ENCODE measurements at regions of chr7 and their contacts with region 1.

Region 1: DNA sequence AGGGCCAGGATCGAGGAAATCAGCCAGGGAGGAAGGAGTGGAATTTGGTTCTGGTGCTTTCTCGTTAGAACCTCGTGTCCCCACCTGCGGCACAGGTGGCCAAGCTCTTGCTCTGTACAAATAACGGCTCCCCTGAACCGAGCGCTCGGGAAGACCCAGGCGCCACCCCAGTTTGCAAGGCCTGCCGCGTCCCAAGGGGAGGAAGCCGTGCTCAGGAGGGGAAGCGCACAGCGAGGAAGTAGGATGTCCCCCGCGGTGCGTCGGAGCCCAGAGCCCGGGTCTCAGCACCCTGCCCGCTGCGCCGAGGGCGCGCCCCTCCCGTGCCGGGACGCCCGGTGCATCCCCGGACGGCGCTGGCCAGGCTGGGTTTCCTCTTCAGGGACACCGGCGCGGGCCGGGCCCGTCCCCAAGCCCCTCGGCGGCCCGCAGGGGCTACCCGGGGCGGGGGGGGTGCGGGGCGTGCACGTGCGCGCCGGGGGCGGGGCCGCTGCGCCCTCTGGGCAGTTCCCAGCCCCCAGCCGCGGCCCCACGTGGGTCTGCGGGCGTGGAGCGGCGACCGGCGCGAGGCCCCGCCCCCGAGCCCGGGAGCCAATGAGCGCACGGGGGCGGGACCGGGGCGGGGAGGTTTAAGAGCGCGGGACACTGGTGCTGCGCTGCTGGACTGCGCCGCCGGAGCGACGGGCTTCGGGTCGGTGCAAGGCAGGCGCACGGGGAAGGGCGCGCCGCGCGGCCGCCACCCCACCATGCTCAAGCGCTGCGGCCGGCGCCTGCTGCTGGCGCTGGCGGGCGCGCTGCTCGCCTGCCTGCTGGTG is at the start of gene LFNG:
- DNase-seq: peak; percentile 96
- H3K4me3 Mint-ChIP-seq: peak within 1 kb of the TSS; percentile 97
- H3K27ac Mint-ChIP-seq: peak within 1 kb of the TSS; percentile 91
- H3K4me1 Mint-ChIP-seq: peaks cover 35% of the 10 kb centered on the region
- H3K27me3 Mint-ChIP-seq: peaks cover 7% of the 10 kb centered on the region
- total RNA-seq, gene LFNG: 33.9 and 34.2 TPM in 2 replicates

Region 2: GRCh38 chr7:2354186-2354938 is 165.0 kb before region 1 on chr7 and contains the start of gene EIF3B:
- intact Hi-C with region 1: loop called (anchors 5 kb)
- DNase-seq: peak; percentile 96
- H3K4me3 Mint-ChIP-seq: peak within 1 kb of the TSS; percentile 96
- H3K27ac Mint-ChIP-seq: peak within 1 kb of the TSS; percentile 98
- H3K4me1 Mint-ChIP-seq: peaks cover 30% of the 10 kb centered on the region
- H3K27me3 Mint-ChIP-seq: no peaks in the 10 kb centered on the region
- total RNA-seq, gene EIF3B: 284 TPM in 2 replicates

Region 3: DNA sequence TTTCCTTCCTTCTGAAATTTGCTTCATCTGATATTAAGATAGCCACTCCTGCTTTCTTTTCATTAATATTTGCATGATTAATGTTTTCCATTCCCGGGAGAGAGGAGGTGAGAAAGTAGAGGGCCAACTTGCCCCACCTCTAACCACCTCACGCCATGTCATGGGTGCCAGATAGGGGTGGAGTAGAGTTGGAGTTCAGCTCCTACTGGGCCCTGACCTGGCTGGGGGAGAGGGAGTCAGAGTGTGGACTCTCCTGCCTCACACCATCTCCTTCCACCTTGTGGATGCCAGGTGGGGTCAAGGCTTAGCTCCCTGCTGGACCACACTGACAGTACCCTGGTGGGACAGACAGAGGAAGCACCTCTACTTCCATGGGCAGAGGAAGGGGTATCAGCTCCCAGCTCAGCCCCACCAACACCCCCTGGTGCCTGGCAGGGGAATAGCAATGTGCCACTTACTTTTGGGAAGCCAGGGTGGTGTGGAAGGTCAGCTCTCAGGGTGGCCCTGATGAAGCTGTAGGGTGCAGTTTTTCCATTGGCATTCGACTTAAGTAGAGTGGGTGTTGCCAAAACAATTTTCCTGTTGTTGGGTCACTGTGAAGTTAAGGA is 88.0 kb before region 1 on chr7:
- intact Hi-C with region 1: no loop called
- DNase-seq: peak; percentile 80
- H3K4me3 Mint-ChIP-seq: no peak overlapping the region
- H3K27ac Mint-ChIP-seq: no peak overlapping the region
- H3K4me1 Mint-ChIP-seq: peaks cover 7% of the 10 kb centered on the region
- H3K27me3 Mint-ChIP-seq: no peaks in the 10 kb centered on the region

Region 4: GRCh38 chr7:2477447-2478398 is 41.6 kb before region 1 on chr7:
- intact Hi-C with region 1: loop called (anchors 5 kb)
- DNase-seq: peak; percentile 91
- H3K4me3 Mint-ChIP-seq: no peak overlapping the region
- H3K27ac Mint-ChIP-seq: no peak overlapping the region
- H3K4me1 Mint-ChIP-seq: peaks cover 3% of the 10 kb centered on the region
- H3K27me3 Mint-ChIP-seq: peaks cover 2% of the 10 kb centered on the region

Region 5: DNA sequence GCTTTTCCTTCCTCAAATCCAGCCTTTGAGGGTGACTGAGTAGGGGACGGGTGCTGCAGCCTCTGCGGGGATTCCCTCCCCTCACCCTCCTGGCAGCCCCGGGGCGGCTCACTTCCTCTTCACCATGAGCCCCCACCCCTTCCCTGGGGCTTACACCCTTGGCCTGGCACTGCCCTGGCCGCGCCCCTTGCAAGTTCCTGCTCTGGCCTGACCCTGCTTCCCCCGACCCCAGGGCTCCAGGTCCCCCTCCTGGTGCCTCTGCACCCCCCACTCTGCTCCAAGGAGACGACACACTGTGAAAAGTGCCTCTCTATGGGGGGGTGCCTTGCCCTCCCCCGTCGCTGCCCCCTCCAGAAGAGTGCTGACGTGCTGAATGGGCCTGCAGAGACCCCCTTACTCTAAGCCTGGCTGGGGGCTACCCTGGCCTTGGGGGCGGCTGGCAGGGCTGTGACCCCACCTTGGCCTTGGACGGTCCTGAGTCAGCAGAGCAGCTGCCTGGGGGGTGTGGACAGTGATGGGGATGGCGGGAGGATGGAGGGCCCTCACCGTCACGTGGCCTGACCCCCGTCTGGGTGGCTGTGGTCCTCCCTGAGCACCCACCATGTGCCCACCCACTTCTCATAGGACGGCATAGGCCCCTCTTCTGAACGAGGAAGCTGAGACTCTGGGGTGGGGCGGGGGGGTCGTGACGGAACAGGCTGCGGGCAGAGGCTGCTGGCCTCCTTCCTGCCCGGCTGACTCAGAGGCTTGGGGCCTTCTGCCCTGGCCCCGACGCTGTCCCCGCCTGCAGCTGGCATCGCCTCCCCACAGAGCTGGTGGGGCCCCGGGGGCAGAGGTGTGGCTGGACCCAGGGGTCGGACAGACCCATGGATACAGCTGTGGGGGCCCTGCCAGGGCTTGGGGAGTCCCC is 10.1 kb after region 1 on chr7:
- intact Hi-C with region 1: loop called (anchors 1 kb)
- DNase-seq: peak; percentile 87
- H3K4me3 Mint-ChIP-seq: peak overlapping the region; percentile 83
- H3K27ac Mint-ChIP-seq: peak overlapping the region; percentile 98
- H3K4me1 Mint-ChIP-seq: peaks cover 42% of the 10 kb centered on the region
- H3K27me3 Mint-ChIP-seq: no peaks in the 10 kb centered on the region

Region 6: GRCh38 chr7:2632733-2633537 is 113.6 kb after region 1 on chr7:
- intact Hi-C with region 1: loop called (anchors 1 kb)
- DNase-seq: peak; percentile 81
- H3K4me3 Mint-ChIP-seq: peak overlapping the region; percentile 96
- H3K27ac Mint-ChIP-seq: peak overlapping the region; percentile 91
- H3K4me1 Mint-ChIP-seq: peaks cover 17% of the 10 kb centered on the region
- H3K27me3 Mint-ChIP-seq: peaks cover 1% of the 10 kb centered on the region

Measured in activated CD4-positive, alpha-beta T cell treated with anti-CD3 and anti-CD28 coated beads, Interleukin-2, amount 10 ng/mL, durations not matched to agents 24 days and 14 days (primary cell).